ENCODE measurements at regions of chr1 and their contacts with region 1.

Region 1: GRCh38 chr1:180881806-180882509 is 30.7 kb upstream of the KIAA1614 start:
- DNase-seq: no peak
- H3K4me3 ChIP-seq: no peak overlapping the region
- H3K27me3 ChIP-seq: no peaks in the 10 kb centered on the region
- CTCF ChIP-seq: peak; percentile 53

Region 2: DNA sequence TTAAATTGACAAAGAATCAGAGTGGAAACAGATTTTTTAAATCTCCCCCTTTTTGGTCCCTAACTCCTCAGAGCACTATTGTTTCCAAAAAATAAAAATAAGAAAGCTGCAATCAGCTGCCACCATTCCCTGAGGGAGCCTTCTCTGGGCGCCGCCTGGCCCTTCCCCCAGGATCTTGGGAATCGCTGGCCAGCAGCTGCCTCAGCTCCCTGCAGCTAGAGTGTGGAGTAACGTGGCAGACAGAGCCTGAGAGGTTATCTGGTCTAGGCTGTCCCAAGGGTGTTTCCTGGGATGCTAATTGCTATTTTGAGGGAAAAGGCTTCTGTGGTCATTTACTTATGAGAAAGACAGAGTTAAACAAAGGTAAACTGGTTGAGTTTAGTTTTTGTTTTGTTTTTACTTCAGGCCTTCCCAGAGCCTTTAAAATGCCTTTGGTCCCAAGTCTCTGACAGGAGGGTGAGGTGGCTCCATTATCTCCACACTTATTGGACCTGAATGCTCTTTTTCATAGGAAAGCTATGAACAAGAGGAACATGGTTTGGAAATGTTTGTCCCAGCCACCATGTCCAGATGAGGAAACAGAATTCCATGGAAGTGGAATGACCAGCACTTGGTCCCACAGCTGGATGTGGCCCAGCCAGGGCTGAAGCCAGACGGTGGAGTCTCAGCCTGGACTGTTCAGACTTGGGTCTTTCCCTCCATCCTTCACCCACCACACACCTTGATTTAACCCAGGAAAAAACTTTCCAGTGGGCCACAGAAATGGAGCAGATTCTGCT is 16.7 kb after region 1 on chr1:
- CTCF ChIA-PET with region 1: interaction called, 17 read pairs
- POLR2A ChIA-PET with region 1: no interaction called
- DNase-seq: no peak
- H3K4me3 ChIP-seq: no peak overlapping the region
- H3K27me3 ChIP-seq: no peaks in the 10 kb centered on the region; the same call in 1 of the 2 replicates
- CTCF ChIP-seq: no peak

Region 3: DNA sequence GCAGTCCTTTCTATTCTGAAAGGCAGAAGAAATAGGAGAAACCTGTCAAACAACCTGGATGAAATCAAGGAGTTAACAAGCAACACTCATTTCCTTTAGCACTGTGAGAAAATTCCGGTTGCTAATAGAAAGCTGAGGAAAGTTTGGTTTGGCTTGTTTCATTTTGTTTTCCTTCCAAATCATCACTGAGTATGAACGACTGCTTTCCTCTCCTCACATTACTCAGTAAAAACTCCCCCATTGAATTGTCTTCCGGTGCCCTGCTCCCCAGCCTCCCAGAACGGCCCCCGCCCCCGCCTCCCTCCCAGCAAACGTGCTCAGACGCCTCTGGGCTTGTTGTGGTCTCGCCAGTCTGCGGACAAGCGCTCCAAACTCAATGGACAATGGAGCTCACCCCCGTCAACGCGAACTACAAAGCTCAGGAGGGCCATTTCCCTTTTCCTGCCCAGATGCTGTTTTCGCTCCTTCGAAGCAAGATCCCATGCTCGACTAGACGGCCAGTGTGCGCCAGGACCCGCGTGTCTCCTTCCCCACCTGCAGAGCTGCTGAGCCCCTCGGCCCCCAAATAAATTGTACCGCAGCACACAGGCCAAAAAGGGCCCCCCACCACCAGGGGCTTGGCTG is 140.0 kb after region 1 on chr1:
- CTCF ChIA-PET with region 1: no interaction called
- POLR2A ChIA-PET with region 1: interaction called, 21 read pairs
- DNase-seq: no peak
- H3K4me3 ChIP-seq: peak overlapping the region; percentile 84
- H3K27me3 ChIP-seq: no peaks in the 10 kb centered on the region
- CTCF ChIP-seq: no peak

Region 4: DNA sequence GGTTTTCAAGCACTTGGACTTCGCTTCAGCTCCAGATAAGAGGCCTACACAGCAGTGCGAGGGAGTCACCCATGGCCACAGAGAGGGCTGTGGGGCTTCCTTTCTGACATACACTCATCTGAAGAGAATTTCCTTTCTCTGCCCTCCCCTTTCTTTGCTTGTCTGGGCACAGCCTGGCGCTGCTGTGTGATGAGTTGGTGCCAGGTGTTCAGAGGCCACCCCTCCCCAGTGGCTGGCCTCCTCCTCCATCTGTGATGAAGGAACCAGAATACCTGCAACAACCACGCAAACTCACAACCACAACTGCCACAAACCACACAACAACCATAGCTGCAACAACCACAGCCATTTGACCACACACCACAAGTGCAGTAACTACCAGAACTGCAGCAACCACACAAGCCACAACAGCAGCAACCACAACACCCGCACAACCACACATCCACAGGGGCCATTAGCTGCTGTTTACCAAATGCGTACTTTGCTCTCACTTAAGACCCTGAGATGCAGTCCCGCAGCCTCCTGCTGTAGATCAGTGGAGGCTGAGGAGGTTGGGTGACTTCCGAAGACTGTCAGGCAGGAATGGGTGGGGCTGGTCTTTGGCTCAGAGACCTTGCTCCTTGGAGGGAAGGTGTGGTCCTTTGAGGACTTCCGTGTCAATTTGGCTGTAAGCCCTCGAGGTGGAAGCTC is 277.6 kb after region 1 on chr1:
- CTCF ChIA-PET with region 1: interaction called, 15 read pairs
- POLR2A ChIA-PET with region 1: no interaction called
- DNase-seq: no peak
- H3K4me3 ChIP-seq: no peak overlapping the region
- H3K27me3 ChIP-seq: no peaks in the 10 kb centered on the region
- CTCF ChIP-seq: no peak

Region 5: GRCh38 chr1:181166377-181167196 is 284.6 kb after region 1 on chr1:
- CTCF ChIA-PET with region 1: interaction called, 28 read pairs
- POLR2A ChIA-PET with region 1: no interaction called
- DNase-seq: no peak
- H3K4me3 ChIP-seq: no peak overlapping the region
- H3K27me3 ChIP-seq: 0 out of 2 replicates have a peak, but pooled peaks cover 3% of the 10 kb centered on the region
- CTCF ChIP-seq: peak; percentile 78